ENCODE measurements at regions of chr7 and their contacts with region 1.

Region 1: GRCh38 chr7:155356323-155357105 is 58.8 kb downstream of the INSIG1 start:
- DNase-seq: peak; percentile 61
- ATAC-seq: peak; percentile 66
- H3K4me3 Mint-ChIP-seq: no peak overlapping the region
- H3K27ac Mint-ChIP-seq: no peak overlapping the region
- H3K4me1 Mint-ChIP-seq: peaks cover 24% of the 10 kb centered on the region
- H3K27me3 Mint-ChIP-seq: peaks cover 21% of the 10 kb centered on the region
- CTCF ChIP-seq: no peak; the same call in 1 of the 2 replicates

Region 2: GRCh38 chr7:154913638-154914312 is 442.7 kb before region 1 on chr7:
- CTCF ChIA-PET with region 1: interaction called, 10 read pairs
- POLR2A ChIA-PET with region 1: no interaction called
- DNase-seq: peak; percentile 97
- ATAC-seq: peak; percentile 95
- H3K4me3 Mint-ChIP-seq: peak overlapping the region; percentile 70
- H3K27ac Mint-ChIP-seq: no peak overlapping the region
- H3K4me1 Mint-ChIP-seq: peaks cover 4% of the 10 kb centered on the region
- H3K27me3 Mint-ChIP-seq: peaks cover 28% of the 10 kb centered on the region
- CTCF ChIP-seq: peak; percentile 75

Region 3: GRCh38 chr7:154927624-154928143 is 428.8 kb before region 1 on chr7:
- CTCF ChIA-PET with region 1: interaction called, 10 read pairs
- POLR2A ChIA-PET with region 1: no interaction called
- DNase-seq: peak; percentile 68
- ATAC-seq: peak; percentile 56
- H3K4me3 Mint-ChIP-seq: no peak overlapping the region
- H3K27ac Mint-ChIP-seq: no peak overlapping the region
- H3K4me1 Mint-ChIP-seq: peaks cover 37% of the 10 kb centered on the region
- H3K27me3 Mint-ChIP-seq: peaks cover 2% of the 10 kb centered on the region
- CTCF ChIP-seq: 0 out of 2 replicates have a peak, but pooled peaks have one; percentile 23

Region 4: DNA sequence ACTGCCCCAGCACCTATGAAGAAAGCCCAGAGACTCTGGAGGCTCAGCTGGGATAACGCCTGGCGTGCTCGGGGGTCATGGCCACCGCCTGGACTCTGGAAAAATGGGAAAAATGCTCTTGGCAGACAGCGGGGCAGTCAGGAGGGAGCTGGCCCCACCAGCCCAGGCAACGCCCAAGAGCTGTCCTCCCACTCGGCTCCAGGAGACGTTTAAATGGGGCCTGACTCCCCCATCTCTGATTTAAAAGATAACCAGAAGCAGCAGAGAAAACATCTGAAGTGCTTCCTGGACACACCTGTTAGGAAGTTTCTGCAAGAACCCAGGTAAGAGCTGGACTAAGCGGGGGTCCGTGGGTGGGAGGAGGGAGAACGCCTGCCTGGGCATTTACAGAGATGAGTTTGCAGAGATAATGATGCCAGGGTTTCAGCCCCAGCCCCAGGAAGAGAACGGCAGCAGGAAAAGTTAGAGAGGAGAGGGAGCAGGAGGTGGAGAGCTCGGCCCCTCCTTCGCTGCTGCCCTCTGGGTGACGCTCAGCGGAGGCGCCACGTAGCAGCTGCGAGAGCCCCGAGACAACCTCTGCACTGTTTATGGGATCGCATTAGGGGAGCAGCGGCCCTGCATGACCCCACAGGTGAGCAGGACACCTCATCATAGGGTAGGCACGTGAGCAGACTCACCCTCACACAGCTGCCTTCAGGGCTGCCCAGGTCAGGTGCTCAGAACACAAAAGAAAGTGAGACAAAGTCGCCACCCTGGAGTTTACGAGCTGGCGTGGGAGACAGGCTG is 142.4 kb before region 1 on chr7:
- CTCF ChIA-PET with region 1: interaction called, 11 read pairs
- POLR2A ChIA-PET with region 1: no interaction called
- DNase-seq: no peak
- ATAC-seq: peak; percentile 57
- H3K4me3 Mint-ChIP-seq: no peak overlapping the region
- H3K27ac Mint-ChIP-seq: no peak overlapping the region
- H3K4me1 Mint-ChIP-seq: peaks cover 21% of the 10 kb centered on the region
- H3K27me3 Mint-ChIP-seq: no peaks in the 10 kb centered on the region
- CTCF ChIP-seq: no peak

Region 5: DNA sequence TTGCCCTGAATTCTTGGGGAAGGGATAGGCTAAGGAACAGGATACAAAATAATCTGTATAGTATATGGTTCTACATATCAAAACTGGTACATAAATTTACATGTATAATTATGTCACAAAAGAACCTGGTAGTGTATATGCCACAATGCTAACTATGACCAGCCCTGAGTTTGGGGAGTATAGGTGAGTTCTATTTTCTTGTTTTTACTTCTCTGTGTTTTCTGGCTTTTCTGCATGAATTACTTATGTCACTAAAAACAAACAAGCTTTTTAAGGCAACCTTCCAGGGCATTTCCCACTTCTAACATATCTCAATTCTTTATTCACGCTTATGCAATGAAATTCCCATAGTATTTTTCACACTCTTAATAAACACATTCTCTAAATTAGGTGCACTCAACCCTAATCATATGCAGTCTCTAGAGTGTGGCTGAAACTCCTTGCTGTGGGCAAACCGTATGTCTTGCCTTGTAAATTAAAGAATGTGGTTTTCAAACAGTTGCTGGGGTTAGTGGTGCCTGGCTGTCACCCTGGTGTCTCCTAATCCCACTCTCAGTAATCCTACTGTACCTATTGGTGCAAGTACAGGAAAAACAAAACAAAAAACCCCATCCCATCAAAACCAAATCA is 72.8 kb before region 1 on chr7:
- CTCF ChIA-PET with region 1: no interaction called
- POLR2A ChIA-PET with region 1: no interaction called
- DNase-seq: no peak
- ATAC-seq: no peak
- H3K4me3 Mint-ChIP-seq: no peak overlapping the region
- H3K27ac Mint-ChIP-seq: no peak overlapping the region
- H3K4me1 Mint-ChIP-seq: peaks cover 11% of the 10 kb centered on the region
- H3K27me3 Mint-ChIP-seq: no peaks in the 10 kb centered on the region; the same call in 1 of the 2 replicates
- CTCF ChIP-seq: no peak

Region 6: GRCh38 chr7:155344600-155345433 is 11.7 kb before region 1 on chr7:
- CTCF ChIA-PET with region 1: interaction called, 30 read pairs
- POLR2A ChIA-PET with region 1: no interaction called
- DNase-seq: peak; percentile 82
- ATAC-seq: peak; percentile 86
- H3K4me3 Mint-ChIP-seq: peak overlapping the region; percentile 60
- H3K27ac Mint-ChIP-seq: no peak overlapping the region
- H3K4me1 Mint-ChIP-seq: no peaks in the 10 kb centered on the region
- H3K27me3 Mint-ChIP-seq: peaks cover 11% of the 10 kb centered on the region
- CTCF ChIP-seq: peak; percentile 97

Region 7: GRCh38 chr7:155371884-155372781 is 15.6 kb after region 1 on chr7:
- CTCF ChIA-PET with region 1: interaction called, 10 read pairs
- POLR2A ChIA-PET with region 1: no interaction called
- DNase-seq: no peak
- ATAC-seq: peak; percentile 17
- H3K4me3 Mint-ChIP-seq: peak overlapping the region; percentile 62
- H3K27ac Mint-ChIP-seq: no peak overlapping the region
- H3K4me1 Mint-ChIP-seq: peaks cover 29% of the 10 kb centered on the region
- H3K27me3 Mint-ChIP-seq: peaks cover 94% of the 10 kb centered on the region
- CTCF ChIP-seq: no peak